ENCODE measurements at regions of chr10 and their contacts with region 1.

Region 1: DNA sequence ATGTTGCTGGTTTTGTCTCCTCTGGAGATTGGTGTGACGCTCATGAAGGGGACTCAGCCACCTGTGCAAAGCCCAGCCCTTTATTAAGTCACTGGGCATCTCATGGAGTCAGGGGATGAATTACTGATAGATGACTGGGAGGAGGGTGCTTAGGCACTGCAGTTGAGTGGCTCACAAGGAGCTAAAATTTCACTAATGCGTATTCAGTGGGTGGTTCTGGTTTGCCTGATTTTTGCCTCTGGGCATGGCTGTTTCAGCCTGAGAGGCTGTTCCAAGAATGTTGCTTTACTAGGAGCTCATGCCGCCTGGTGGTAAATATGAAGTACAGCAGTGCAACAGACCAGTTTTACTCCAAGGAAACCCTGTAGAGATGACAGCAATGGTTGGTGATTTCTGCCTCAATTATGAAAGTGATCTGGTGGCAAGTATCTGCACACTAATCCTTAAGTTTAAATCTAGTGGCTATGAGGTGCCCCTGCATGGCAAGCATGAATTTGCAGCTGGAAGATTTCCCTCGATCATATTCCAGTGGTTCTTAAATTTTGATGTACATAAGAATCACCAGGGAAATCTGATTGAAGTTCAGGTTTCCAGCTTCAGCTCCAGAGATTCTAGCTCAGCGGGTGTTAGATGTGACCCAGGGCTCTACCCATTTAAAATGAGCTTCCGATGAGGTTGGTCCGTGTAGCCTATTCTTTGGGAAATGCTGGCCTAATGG is 19.9 kb downstream of the ACTA2 start:
- DNase-seq: peak in 1 of 2 donors; percentile 68
- ATAC-seq: peak; percentile 87
- H3K4me3 ChIP-seq: no peak overlapping the region
- H3K27ac ChIP-seq: peak overlapping the region in 1 of 2 donors; percentile 81
- H3K4me1 ChIP-seq: no peaks in the 10 kb centered on the region
- H3K27me3 ChIP-seq: no peaks in the 10 kb centered on the region

Region 2: GRCh38 chr10:88835096-88835909 is 97.4 kb before region 1 on chr10:
- intact Hi-C with region 1: loop called (anchors 2 kb)
- DNase-seq: peak; percentile 91 to 95
- ATAC-seq: peak; percentile 92
- H3K4me3 ChIP-seq: no peak overlapping the region
- H3K27ac ChIP-seq: no peak overlapping the region
- H3K4me1 ChIP-seq: no peaks in the 10 kb centered on the region
- H3K27me3 ChIP-seq: no peaks in the 10 kb centered on the region

Region 3: GRCh38 chr10:88841316-88842111 is 91.2 kb before region 1 on chr10:
- intact Hi-C with region 1: loop called in 1 of 2 experiments (anchors 2 kb)
- DNase-seq: peak in 1 of 2 donors; percentile 45
- ATAC-seq: no peak
- H3K4me3 ChIP-seq: no peak overlapping the region
- H3K27ac ChIP-seq: no peak overlapping the region
- H3K4me1 ChIP-seq: no peaks in the 10 kb centered on the region
- H3K27me3 ChIP-seq: no peaks in the 10 kb centered on the region

Region 4: GRCh38 chr10:88880282-88881076 is 52.2 kb before region 1 on chr10:
- intact Hi-C with region 1: loop called in 1 of 2 experiments (anchors 1 kb)
- DNase-seq: peak; percentile 91 to 92
- ATAC-seq: peak; percentile 96
- H3K4me3 ChIP-seq: peak overlapping the region; percentile 38 to 44
- H3K27ac ChIP-seq: peak overlapping the region in 1 of 2 donors; percentile 37
- H3K4me1 ChIP-seq: no peaks in the 10 kb centered on the region
- H3K27me3 ChIP-seq: no peaks in the 10 kb centered on the region

Region 5: GRCh38 chr10:88990384-88991160 is 57.9 kb after region 1 on chr10 and contains the start of gene FAS:
- intact Hi-C with region 1: loop called (anchors 2 kb)
- DNase-seq: peak; percentile 86 to 90
- ATAC-seq: peak; percentile 86
- H3K4me3 ChIP-seq: peak within 1 kb of the TSS; percentile 56 to 91
- H3K27ac ChIP-seq: peak within 1 kb of the TSS; percentile 0 to 64
- H3K4me1 ChIP-seq: peaks cover 3 to 6% of the 10 kb centered on the region in 2 donors
- H3K27me3 ChIP-seq: no peaks in the 10 kb centered on the region
- total RNA-seq, gene FAS: 27.4 to 28.5 TPM

Region 6: DNA sequence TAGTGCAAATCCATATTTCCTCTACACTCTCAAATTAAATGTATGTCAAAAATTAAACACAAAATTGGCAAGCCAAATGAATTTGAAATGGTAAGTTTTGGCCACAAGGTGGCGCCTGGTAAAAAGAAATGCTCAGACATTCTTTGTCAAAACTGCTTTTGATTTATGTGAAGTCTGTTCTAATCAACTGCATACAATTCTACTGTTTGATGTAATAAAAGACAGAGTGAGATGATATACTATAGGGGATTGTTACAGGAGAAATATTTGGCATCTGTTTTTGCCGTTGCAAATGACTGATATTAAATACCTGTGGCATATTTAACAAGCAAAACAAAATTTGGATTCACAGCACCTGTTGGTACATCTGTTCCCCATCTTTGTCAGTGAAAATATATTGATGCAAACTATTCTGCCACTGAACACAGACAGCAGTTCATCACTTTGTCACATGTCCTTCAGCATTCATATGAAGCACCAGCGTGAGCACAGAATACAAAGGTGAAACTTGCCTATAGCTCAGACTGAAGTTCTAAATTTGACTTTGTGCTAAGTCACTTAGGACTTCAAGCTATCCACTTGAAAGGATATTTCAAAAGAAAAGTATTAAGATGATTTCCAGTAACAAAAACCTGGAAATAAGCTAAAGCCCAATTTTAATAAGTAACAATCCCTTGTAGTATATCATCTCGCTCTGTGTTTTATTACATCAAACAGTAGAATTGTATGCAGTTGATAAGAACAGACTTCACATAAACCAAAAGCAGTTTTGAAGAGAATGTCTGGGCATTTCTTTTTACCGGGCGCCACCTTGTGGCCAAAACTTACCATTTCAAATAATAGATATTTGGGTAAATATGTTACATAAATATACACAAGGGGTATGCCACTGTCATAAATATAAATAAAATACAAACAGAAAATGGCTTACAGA is 284.6 kb after region 1 on chr10:
- intact Hi-C with region 1: loop called in 1 of 2 experiments (anchors 10 kb)
- DNase-seq: no peak
- ATAC-seq: peak; percentile 55
- H3K4me3 ChIP-seq: no peak overlapping the region
- H3K27ac ChIP-seq: no peak overlapping the region
- H3K4me1 ChIP-seq: no peaks in the 10 kb centered on the region
- H3K27me3 ChIP-seq: no peaks in the 10 kb centered on the region